Ascending aorta (tissue), 2 donors: ENCODE measurements at regions of chr12 and their contacts with region 1.

Region 1: GRCh38 chr12:452667-453210 is 7.0 kb upstream of the B4GALNT3 start:
- DNase-seq: no peak
- H3K4me3 ChIP-seq: no peak overlapping the region
- H3K27ac ChIP-seq: no peak overlapping the region
- H3K4me1 ChIP-seq: no peaks in the 10 kb centered on the region
- H3K27me3 ChIP-seq: no peaks in the 10 kb centered on the region
- CTCF ChIP-seq: peak in 1 of 3 experiments; percentile 47

Region 2: GRCh38 chr12:366820-367219 is 85.9 kb before region 1 on chr12:
- intact Hi-C with region 1: no loop called
- DNase-seq: no peak
- H3K4me3 ChIP-seq: no peak overlapping the region
- H3K27ac ChIP-seq: no peak overlapping the region
- H3K4me1 ChIP-seq: no peaks in the 10 kb centered on the region
- H3K27me3 ChIP-seq: no peaks in the 10 kb centered on the region
- CTCF ChIP-seq: no peak

Region 3: GRCh38 chr12:422526-422925 is 30.2 kb before region 1 on chr12:
- intact Hi-C with region 1: no loop called
- DNase-seq: no peak
- H3K4me3 ChIP-seq: no peak overlapping the region
- H3K27ac ChIP-seq: no peak overlapping the region
- H3K4me1 ChIP-seq: no peaks in the 10 kb centered on the region
- H3K27me3 ChIP-seq: no peaks in the 10 kb centered on the region
- CTCF ChIP-seq: no peak

Region 4: GRCh38 chr12:501722-502447 is 49.1 kb after region 1 on chr12:
- intact Hi-C with region 1: loop called (anchors 1 kb)
- DNase-seq: no peak
- H3K4me3 ChIP-seq: no peak overlapping the region
- H3K27ac ChIP-seq: no peak overlapping the region
- H3K4me1 ChIP-seq: peaks cover 0 to 13% of the 10 kb centered on the region in 2 donors
- H3K27me3 ChIP-seq: no peaks in the 10 kb centered on the region
- CTCF ChIP-seq: no peak

Region 5: GRCh38 chr12:2052826-2053674 is 1600.3 kb after region 1 on chr12 and contains the start of gene CACNA1C:
- intact Hi-C with region 1: no loop called
- DNase-seq: peak in 1 of 2 donors; percentile 78
- H3K4me3 ChIP-seq: peak within 1 kb of the TSS; percentile 60 to 99
- H3K27ac ChIP-seq: peak within 1 kb of the TSS; percentile 89 to 99
- H3K4me1 ChIP-seq: peaks cover 12 to 19% of the 10 kb centered on the region in 2 donors
- H3K27me3 ChIP-seq: no peaks in the 10 kb centered on the region
- CTCF ChIP-seq: peak; percentile 14 to 63 (median 48)
- total RNA-seq, gene CACNA1C: 102 TPM